WTC11 (cell line): ENCODE measurements at regions of chr14 and their contacts with region 1.

Region 1: GRCh38 chr14:80202888-80203562 is 8.3 kb downstream of the DIO2 start:
- DNase-seq: peak; percentile 83
- ATAC-seq: peak; percentile 95
- H3K4me3 Mint-ChIP-seq: no peak overlapping the region
- H3K27ac Mint-ChIP-seq: no peak overlapping the region
- H3K4me1 Mint-ChIP-seq: no peaks in the 10 kb centered on the region
- H3K27me3 Mint-ChIP-seq: peaks cover 5% of the 10 kb centered on the region
- CTCF ChIP-seq: peak; percentile 60

Region 2: GRCh38 chr14:78933948-78934524 is 1269.0 kb before region 1 on chr14:
- CTCF ChIA-PET with region 1: interaction called, 10 read pairs
- POLR2A ChIA-PET with region 1: no interaction called
- DNase-seq: no peak
- ATAC-seq: peak; percentile 36; the same call in 1 of the 2 replicates
- H3K4me3 Mint-ChIP-seq: no peak overlapping the region
- H3K27ac Mint-ChIP-seq: no peak overlapping the region
- H3K4me1 Mint-ChIP-seq: peaks cover 15% of the 10 kb centered on the region
- H3K27me3 Mint-ChIP-seq: no peaks in the 10 kb centered on the region
- CTCF ChIP-seq: peak; percentile 56

Region 3: DNA sequence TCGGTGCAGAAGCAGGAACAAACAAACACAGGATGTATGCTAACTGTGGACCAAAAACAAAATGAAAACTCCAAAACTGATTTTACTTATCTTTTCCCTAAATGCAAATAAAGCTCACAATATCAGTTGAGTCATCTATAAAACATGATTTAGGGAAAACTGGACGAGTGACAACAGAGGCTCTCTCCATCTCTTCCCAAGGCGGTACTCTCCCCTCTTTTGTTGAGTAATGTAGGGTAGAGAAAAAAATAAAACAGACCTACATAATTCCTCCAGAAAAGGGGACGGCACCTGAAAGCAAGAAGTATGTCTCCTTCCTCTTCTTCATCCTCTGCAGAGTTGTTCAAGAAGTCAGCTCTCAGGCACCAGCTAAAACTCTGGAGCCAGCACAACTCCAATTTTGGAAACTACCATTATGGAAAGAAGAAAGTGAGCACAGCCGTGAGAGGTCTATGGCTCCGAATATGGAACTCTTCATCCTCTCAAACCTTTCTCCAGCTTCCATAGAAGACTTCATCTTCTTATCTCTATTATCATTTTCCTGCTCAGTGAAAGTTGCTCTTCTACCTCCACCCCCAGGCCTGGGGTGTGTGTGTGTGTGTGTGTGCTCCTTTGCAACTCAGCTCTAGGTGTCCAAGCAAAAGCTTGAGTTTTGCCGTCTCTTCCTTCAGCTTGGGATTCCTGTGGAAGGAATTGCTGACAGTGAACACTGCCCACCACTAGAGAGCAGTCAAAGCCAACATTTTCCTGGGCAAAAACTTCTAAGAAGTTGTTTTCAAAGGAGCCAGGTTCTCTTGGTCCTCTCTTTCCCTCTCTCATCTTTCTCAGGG is 147.1 kb before region 1 on chr14:
- CTCF ChIA-PET with region 1: interaction called, 17 read pairs
- POLR2A ChIA-PET with region 1: no interaction called
- DNase-seq: peak; percentile 37
- ATAC-seq: peak; percentile 87
- H3K4me3 Mint-ChIP-seq: no peak overlapping the region
- H3K27ac Mint-ChIP-seq: no peak overlapping the region
- H3K4me1 Mint-ChIP-seq: no peaks in the 10 kb centered on the region
- H3K27me3 Mint-ChIP-seq: no peaks in the 10 kb centered on the region
- CTCF ChIP-seq: peak; percentile 57; the same call in 1 of the 2 replicates

Region 4: DNA sequence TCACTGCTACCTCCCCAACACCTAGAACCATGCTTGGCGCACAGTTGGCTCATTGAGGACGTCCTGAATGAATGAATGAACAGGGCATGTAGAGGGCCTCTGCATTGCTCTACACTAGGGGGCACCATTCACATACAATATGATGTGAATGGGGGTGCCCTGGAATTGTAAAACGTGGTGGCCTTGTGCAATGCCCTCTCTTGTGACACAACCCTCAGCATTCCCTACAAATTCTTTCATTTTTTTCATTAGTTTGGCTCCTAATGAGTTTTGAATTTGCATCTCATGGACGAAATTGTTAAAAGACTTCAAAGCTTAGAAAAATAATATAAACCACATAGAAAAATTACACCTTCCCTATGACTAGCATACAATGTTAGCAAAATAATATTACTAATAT is 10.6 kb after region 1 on chr14:
- CTCF ChIA-PET with region 1: interaction called, 13 read pairs
- POLR2A ChIA-PET with region 1: no interaction called
- DNase-seq: peak; percentile 41
- ATAC-seq: peak; percentile 91
- H3K4me3 Mint-ChIP-seq: no peak overlapping the region
- H3K27ac Mint-ChIP-seq: no peak overlapping the region
- H3K4me1 Mint-ChIP-seq: peaks cover 10% of the 10 kb centered on the region
- H3K27me3 Mint-ChIP-seq: peaks cover 4% of the 10 kb centered on the region
- CTCF ChIP-seq: peak; percentile 51

Region 5: GRCh38 chr14:80223696-80224460 is 20.9 kb after region 1 on chr14:
- CTCF ChIA-PET with region 1: no interaction called
- POLR2A ChIA-PET with region 1: no interaction called
- DNase-seq: no peak
- ATAC-seq: no peak
- H3K4me3 Mint-ChIP-seq: no peak overlapping the region
- H3K27ac Mint-ChIP-seq: no peak overlapping the region
- H3K4me1 Mint-ChIP-seq: no peaks in the 10 kb centered on the region
- H3K27me3 Mint-ChIP-seq: no peaks in the 10 kb centered on the region; the same call in 1 of the 2 replicates
- CTCF ChIP-seq: no peak